Left lung (tissue), 14 donors: ENCODE measurements at regions of chr14 and their contacts with region 1.

Region 1: DNA sequence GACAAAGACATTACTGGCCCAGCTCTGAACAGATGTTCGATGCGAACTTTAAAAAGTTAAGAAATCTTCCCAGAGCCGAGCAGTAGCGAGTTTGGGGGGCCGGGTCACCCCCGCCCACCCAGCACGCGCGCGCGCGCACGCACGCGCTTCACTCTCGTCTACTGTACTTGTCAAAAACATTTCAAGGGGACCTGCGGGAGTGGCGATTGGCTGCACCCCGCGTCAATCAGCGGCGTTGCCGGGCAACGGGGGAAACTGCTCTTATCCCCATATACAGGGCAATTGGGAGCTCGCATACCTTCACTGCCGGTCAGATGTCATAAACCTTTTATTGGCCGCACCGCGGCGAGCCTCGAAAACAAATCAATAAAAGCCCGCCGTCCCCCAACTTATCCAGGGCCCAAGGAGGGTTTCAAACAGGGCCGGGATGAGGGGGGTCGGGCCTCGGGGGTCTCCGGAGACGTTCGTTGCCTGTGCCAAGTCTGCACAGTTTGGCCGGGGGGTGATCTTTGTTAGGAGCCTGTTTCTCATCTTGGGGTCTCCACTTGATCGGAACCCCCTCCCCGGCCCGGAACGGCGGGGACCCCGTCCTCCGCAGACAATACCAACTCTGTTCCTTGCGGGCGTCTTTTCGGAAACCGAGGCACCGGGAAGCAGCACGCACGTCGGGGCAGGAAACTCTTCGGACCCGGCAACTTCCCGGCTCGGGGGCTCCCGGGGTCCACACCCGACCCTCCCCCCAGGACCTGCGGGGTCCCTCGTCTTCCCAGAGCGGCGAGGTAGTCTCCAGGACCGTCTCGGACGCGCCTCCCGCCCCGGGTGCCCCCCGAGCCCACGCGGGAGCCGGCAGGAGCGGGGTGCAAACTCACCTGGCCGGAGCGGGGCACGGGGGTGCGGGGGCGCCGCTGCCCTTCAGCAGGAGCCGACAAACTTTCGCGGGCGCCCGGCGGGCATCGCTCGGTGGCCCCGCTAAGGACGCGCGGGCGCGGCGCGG is 734 bp downstream of the FOXN3 start:
- DNase-seq: peak; percentile 97 to 99 (median 98)
- ATAC-seq: peak; percentile 87
- H3K4me3 ChIP-seq: peak overlapping the region; percentile 85 to 87
- H3K27ac ChIP-seq: peak overlapping the region; percentile 95 to 96
- H3K4me1 ChIP-seq: peaks cover 6 to 36% of the 10 kb centered on the region in 2 donors
- H3K27me3 ChIP-seq: no peaks in the 10 kb centered on the region
- CTCF ChIP-seq: no peak

Region 2: DNA sequence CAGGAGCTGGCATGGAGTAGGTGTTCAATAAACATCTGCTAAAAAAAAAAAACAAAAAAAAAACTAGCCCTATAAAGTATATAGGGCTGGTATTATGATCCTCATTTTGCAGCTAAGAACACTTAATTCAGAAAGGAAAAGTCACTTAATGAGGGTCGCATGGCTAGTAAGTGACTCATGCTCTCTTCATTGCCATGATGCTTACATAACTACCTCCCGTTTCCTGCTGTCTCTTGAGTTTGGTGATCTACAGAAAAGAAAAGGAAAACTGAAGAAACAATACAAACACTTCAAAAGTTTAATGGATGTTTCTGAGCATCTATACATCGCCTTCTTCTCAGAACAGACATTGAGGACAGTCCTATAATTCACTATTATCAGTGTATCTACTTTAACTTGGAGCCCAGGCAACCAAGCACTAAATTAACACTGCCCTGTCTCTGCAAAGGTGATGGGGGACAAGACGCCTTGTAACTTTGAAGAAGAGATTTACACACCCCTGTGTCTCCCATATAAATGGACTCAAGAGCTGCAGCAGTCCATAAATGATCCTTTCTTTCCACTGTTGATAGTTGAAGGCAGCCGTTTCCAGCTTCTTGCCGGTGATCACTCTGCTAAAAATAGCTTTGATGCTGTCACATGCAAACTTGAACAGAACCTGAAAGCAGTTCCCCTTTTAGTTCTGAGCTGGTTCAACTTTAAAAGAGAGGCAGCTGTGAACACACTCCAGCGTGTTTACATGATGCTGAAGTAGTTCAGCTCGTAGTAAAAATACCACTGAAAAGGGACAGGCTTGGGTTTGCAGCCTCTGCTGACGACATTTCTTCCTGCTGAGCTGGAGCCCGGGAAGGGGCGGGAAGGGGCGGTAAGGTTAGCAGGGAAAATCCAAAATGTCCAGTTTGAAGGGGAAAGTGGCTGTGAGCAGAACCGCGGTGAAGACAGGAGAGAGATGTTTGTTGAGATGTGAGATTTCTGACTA is 112.6 kb before region 1 on chr14:
- intact Hi-C with region 1: loop called in 1 of 2 experiments (anchors 10 kb)
- DNase-seq: peak in 3 of 4 donors; percentile 84 to 94 (median 84)
- ATAC-seq: peak; percentile 86
- H3K4me3 ChIP-seq: peak overlapping the region in 1 of 2 donors; percentile 0
- H3K27ac ChIP-seq: peak overlapping the region; percentile 84 to 94
- H3K4me1 ChIP-seq: peaks cover 32 to 42% of the 10 kb centered on the region in 2 donors
- H3K27me3 ChIP-seq: no peaks in the 10 kb centered on the region
- CTCF ChIP-seq: no peak

Region 3: GRCh38 chr14:89549381-89550125 is 133.3 kb after region 1 on chr14:
- intact Hi-C with region 1: no loop called
- DNase-seq: no peak
- ATAC-seq: no peak
- H3K4me3 ChIP-seq: no peak overlapping the region
- H3K27ac ChIP-seq: no peak overlapping the region
- H3K4me1 ChIP-seq: no peaks in the 10 kb centered on the region
- H3K27me3 ChIP-seq: no peaks in the 10 kb centered on the region
- CTCF ChIP-seq: no peak